ENCODE measurements at regions of chr12 and their contacts with region 1.

Region 1: GRCh38 chr12:46983393-46984266 is 95.8 kb upstream of the PCED1B start:
- DNase-seq: no peak
- ATAC-seq: peak; percentile 72

Region 2: GRCh38 chr12:46675736-46676135 is 307.9 kb before region 1 on chr12:
- intact Hi-C with region 1: loop called (anchors 5 kb)
- DNase-seq: no peak
- ATAC-seq: no peak

Region 3: DNA sequence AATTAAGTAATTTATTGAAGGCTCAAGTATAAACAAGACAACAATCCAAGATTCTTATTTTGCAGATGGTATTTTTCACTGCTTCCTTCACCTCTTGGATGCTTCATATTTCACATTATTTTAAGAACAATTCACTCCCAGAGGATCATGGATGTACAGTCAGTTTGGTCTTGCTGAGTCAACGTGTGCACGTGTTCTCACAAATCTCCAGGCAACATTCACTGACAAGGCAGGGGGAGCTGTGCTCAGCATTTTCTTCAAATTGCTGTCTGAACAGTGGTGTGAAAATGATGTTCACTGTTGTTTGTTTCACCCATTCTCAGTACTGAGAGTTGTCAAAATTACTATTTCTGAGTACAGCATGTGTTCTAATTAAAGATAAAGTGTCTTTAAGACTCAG is 39.5 kb before region 1 on chr12:
- intact Hi-C with region 1: loop called (anchors 1 kb)
- DNase-seq: no peak
- ATAC-seq: no peak

Measured in Right ventricle myocardium inferior (tissue), 1 donor.